Mammary epithelial cell (primary cell): ENCODE measurements at regions of chrX and their contacts with region 1.

Region 1: GRCh38 chrX:85052636-85053343 is 49.1 kb downstream of the APOOL start:
- DNase-seq: peak; percentile 68
- H3K4me3 ChIP-seq: no peak overlapping the region
- H3K27ac ChIP-seq: peak overlapping the region; percentile 43
- H3K4me1 ChIP-seq: peaks cover 3% of the 10 kb centered on the region
- H3K27me3 ChIP-seq: no peaks in the 10 kb centered on the region
- CTCF ChIP-seq: peak; percentile 34 to 57

Region 2: GRCh38 chrX:84046403-84046984 is 1006.3 kb before region 1 on chrX:
- CTCF ChIA-PET with region 1: no interaction called
- dilution Hi-C with region 1: no loop called
- in situ Hi-C with region 1: no loop called
- intact Hi-C with region 1: loop called (anchors 2 kb)
- DNase-seq: peak; percentile 27
- H3K4me3 ChIP-seq: no peak overlapping the region
- H3K27ac ChIP-seq: no peak overlapping the region
- H3K4me1 ChIP-seq: no peaks in the 10 kb centered on the region
- H3K27me3 ChIP-seq: no peaks in the 10 kb centered on the region
- CTCF ChIP-seq: peak; percentile 78 to 82

Region 3: DNA sequence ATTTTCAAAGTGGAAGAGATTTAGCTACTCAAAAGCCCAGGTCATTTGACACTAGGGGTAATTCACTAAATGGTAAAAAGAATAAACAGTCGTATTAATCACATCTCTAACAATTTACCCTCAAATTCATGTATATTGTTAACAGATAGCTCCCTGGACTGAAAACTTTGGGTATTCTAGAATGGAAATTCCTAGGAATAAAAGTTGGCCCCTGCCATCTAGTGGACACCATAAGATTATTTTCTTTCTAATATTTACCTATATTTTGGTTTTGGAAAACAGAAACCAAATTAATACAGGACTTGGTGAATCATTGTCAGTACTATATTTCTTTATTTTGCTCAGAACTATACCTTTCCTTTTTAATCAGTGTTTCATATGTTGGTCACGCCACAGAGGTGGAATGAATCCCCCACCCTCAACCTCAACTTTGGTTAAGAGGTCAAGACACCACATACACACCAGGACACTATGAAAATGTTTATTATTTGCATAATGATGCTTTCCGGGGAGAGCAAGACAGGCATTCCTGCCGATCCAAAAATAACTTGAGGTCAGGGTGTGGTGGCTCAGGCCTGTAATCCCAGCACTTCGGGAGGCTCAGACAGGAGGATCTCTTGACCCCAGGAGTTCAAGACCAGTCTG is 145.3 kb before region 1 on chrX:
- CTCF ChIA-PET with region 1: interaction called, 3 read pairs
- dilution Hi-C with region 1: no loop called
- in situ Hi-C with region 1: no loop called
- intact Hi-C with region 1: loop called (anchors 2 kb)
- DNase-seq: peak; percentile 9
- H3K4me3 ChIP-seq: no peak overlapping the region
- H3K27ac ChIP-seq: no peak overlapping the region
- H3K4me1 ChIP-seq: no peaks in the 10 kb centered on the region
- H3K27me3 ChIP-seq: no peaks in the 10 kb centered on the region
- CTCF ChIP-seq: peak; percentile 16 to 41

Region 4: DNA sequence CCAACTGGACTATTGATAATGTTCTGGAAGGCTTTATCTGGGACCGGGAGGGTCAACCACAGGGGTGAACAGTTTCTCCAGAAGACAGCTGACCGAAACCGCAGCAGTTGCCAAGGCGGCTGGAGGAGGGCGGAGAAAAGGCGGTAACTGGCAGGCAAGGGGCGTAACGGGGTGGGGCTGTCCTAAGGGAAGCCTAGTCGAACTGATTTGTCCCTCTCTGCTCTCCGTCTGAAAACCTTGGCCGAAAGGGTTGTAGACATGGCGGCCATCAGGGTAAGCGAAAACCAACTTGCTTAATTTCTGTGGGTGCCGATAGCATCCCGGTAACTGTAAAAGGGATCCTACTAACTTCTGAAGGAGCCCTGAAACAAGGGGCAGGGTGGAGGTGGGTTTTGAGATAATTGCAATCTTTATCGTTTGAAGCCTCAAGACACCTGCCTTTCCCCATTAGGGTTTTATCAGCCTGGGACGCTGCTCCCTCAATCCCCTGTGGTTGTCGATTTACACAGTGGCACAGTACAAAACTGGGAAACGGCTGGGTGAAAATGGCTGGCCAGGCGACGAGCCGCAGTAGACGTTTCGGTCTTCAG is 49.0 kb before region 1 on chrX and contains the start of gene APOOL:
- CTCF ChIA-PET with region 1: no interaction called
- dilution Hi-C with region 1: no loop called
- in situ Hi-C with region 1: no loop called
- intact Hi-C with region 1: loop called (anchors 1 kb)
- DNase-seq: peak; percentile 87
- H3K4me3 ChIP-seq: peak within 1 kb of the TSS; percentile 55 to 76 (median 62)
- H3K27ac ChIP-seq: peak within 1 kb of the TSS; percentile 81
- H3K4me1 ChIP-seq: no peaks in the 10 kb centered on the region
- H3K27me3 ChIP-seq: no peaks in the 10 kb centered on the region
- CTCF ChIP-seq: no peak
- total RNA-seq, gene APOOL: 11.3 to 20.6 TPM